Endothelial cell of umbilical vein (primary cell): ENCODE measurements at regions of chr3 and their contacts with region 1.

Region 1: GRCh38 chr3:136042608-136043221 is 77.2 kb downstream of the PPP2R3A start:
- DNase-seq: peak; percentile 67
- H3K4me3 ChIP-seq: no peak overlapping the region
- H3K27ac ChIP-seq: no peak overlapping the region
- H3K4me1 ChIP-seq: no peaks in the 10 kb centered on the region
- H3K27me3 ChIP-seq: no peaks in the 10 kb centered on the region
- CTCF ChIP-seq: peak; percentile 23 to 50
- POLR2A ChIP-seq: no peak

Region 2: DNA sequence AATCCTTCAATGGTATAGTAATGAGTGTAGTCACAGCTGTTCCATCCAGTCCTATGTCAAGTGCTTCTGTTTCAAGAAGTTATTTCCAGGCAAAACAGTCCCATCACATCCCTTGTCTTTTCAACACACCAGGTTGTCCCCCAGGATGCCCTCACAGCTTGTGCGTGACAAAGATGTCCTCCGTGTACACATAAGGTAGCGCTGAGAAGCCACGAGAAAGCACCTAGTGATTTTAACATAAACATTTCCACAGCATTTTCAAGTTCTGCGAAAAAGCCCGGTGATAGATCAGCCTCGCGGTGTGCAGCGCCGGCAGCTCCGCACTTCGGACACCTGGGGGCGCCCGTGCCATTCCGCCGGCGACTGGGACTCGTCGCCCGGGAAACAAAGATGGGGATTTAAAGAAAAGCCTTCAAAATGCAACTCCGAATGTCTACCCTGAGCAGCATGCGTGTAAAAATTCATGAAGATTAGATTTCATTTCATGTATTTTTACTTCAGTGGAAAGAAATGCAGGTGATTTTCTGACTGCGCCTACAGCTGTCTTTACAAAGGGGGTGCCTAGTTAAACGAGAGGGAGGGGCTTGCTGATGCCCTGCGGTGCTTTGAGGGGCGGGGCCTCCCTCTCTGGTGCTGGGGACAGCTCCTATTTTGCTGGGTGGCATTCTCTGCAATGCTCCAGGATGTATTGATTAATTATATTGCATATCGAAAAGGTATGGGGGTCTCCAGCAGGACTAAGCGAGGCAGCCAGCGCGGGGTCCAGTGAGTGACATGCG is 1441.8 kb before region 1 on chr3:
- CTCF ChIA-PET with region 1: interaction called, 36 read pairs
- POLR2A ChIA-PET with region 1: no interaction called
- dilution Hi-C with region 1: no loop called
- intact Hi-C with region 1: no loop called
- DNase-seq: peak; percentile 56
- H3K4me3 ChIP-seq: no peak overlapping the region
- H3K27ac ChIP-seq: no peak overlapping the region
- H3K4me1 ChIP-seq: no peaks in the 10 kb centered on the region
- H3K27me3 ChIP-seq: peaks cover 2 to 4% of the 10 kb centered on the region in 2 experiments
- CTCF ChIP-seq: peak; percentile 96
- POLR2A ChIP-seq: no peak

Region 3: GRCh38 chr3:135895106-135895733 is 147.5 kb before region 1 on chr3:
- CTCF ChIA-PET with region 1: interaction called, 13 read pairs
- POLR2A ChIA-PET with region 1: no interaction called
- dilution Hi-C with region 1: no loop called
- intact Hi-C with region 1: loop called (anchors 1 kb)
- DNase-seq: peak; percentile 78
- H3K4me3 ChIP-seq: no peak overlapping the region
- H3K27ac ChIP-seq: no peak overlapping the region
- H3K4me1 ChIP-seq: no peaks in the 10 kb centered on the region
- H3K27me3 ChIP-seq: peaks cover 0 to 2% of the 10 kb centered on the region in 2 experiments
- CTCF ChIP-seq: peak; percentile 77 to 88
- POLR2A ChIP-seq: no peak

Region 4: GRCh38 chr3:135918580-135918962 is 124.1 kb before region 1 on chr3:
- CTCF ChIA-PET with region 1: interaction called, 280 read pairs
- POLR2A ChIA-PET with region 1: interaction called, 3 read pairs
- dilution Hi-C with region 1: no loop called
- intact Hi-C with region 1: loop called (anchors 1 kb)
- DNase-seq: peak; percentile 42
- H3K4me3 ChIP-seq: no peak overlapping the region
- H3K27ac ChIP-seq: no peak overlapping the region
- H3K4me1 ChIP-seq: no peaks in the 10 kb centered on the region
- H3K27me3 ChIP-seq: peaks cover 0 to 2% of the 10 kb centered on the region in 2 experiments
- CTCF ChIP-seq: peak; percentile 13 to 23
- POLR2A ChIP-seq: no peak

Region 5: GRCh38 chr3:135965506-135966270 is 77.0 kb before region 1 on chr3 and contains the start of gene PPP2R3A:
- CTCF ChIA-PET with region 1: interaction called, 52 read pairs
- POLR2A ChIA-PET with region 1: interaction called, 7 read pairs
- dilution Hi-C with region 1: no loop called
- intact Hi-C with region 1: loop called (anchors 1 kb)
- DNase-seq: peak; percentile 88
- H3K4me3 ChIP-seq: peak within 1 kb of the TSS; percentile 61 to 95 (median 92)
- H3K27ac ChIP-seq: peak within 1 kb of the TSS; percentile 63
- H3K4me1 ChIP-seq: peaks cover 10% of the 10 kb centered on the region
- H3K27me3 ChIP-seq: peaks cover 5 to 6% of the 10 kb centered on the region in 2 experiments
- CTCF ChIP-seq: no peak
- POLR2A ChIP-seq: peak; percentile 37
- total RNA-seq, gene PPP2R3A: 13.8 and 14.6 TPM in 2 replicates

Region 6: GRCh38 chr3:136018876-136019275 is 23.8 kb before region 1 on chr3:
- CTCF ChIA-PET with region 1: interaction called, 19 read pairs
- POLR2A ChIA-PET with region 1: no interaction called
- dilution Hi-C with region 1: no loop called
- intact Hi-C with region 1: no loop called
- DNase-seq: no peak
- H3K4me3 ChIP-seq: no peak overlapping the region
- H3K27ac ChIP-seq: no peak overlapping the region
- H3K4me1 ChIP-seq: no peaks in the 10 kb centered on the region
- H3K27me3 ChIP-seq: no peaks in the 10 kb centered on the region
- CTCF ChIP-seq: no peak
- POLR2A ChIP-seq: no peak